PC-3 (cell line): ENCODE measurements at regions of chr5 and their contacts with region 1.

Region 1: GRCh38 chr5:128579088-128579487 is 41.0 kb upstream of the FBN2 start:
- DNase-seq: peak; percentile 92
- ATAC-seq: peak; percentile 90
- H3K4me3 ChIP-seq: peak overlapping the region; percentile 43; the same call in 1 of the 2 replicates
- H3K27ac ChIP-seq: peak overlapping the region; percentile 97
- H3K4me1 ChIP-seq: peaks cover 38% of the 10 kb centered on the region
- H3K27me3 ChIP-seq: no peaks in the 10 kb centered on the region
- CTCF ChIP-seq: no peak

Region 2: DNA sequence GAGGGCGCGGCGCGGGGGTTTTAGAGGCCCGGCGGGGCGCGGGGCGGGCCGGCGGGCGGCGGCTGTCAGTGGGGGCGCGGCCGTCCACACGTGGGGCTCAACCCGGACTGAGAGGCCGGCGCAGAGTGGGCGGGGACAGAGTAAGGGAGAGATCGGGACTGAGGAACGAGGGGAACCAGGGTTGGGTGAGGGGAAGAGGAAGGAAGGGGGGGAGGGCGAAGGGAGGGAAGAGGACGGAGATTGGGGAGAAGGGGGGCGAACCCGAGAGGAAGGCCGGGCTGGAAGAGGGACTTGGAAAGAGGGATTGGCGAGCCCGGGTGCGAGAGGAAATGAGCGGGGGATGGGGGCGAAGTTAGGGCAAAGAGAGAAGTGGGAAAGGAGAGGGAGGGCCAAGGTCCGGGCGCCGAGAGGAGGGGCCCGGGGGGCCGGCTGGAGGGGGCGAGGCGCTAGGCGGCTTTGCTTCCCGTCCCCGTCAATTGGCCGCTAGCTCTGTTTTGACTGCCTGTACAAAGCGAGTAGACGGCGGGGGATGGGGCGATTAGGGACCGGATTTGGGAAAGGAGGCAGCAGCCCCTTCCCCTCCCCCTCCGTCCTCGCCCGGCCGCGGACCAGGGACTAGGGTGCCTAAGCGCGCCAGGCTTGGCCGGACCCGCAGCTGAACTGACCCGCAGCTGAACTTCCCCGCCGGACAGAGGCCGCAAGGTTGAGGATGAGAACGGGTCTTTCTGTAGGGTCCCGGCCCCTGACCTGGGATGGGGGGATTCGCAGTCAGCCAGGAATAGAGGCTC is 40.6 kb before region 1 on chr5:
- CTCF ChIA-PET with region 1: interaction called, 3 read pairs
- POLR2A ChIA-PET with region 1: interaction called, 9 read pairs
- intact Hi-C with region 1: loop called (anchors 1 kb)
- DNase-seq: peak; percentile 77
- ATAC-seq: peak; percentile 90
- H3K4me3 ChIP-seq: peak overlapping the region; percentile 92
- H3K27ac ChIP-seq: no peak overlapping the region
- H3K4me1 ChIP-seq: peaks cover 22% of the 10 kb centered on the region
- H3K27me3 ChIP-seq: no peaks in the 10 kb centered on the region
- CTCF ChIP-seq: no peak

Region 3: DNA sequence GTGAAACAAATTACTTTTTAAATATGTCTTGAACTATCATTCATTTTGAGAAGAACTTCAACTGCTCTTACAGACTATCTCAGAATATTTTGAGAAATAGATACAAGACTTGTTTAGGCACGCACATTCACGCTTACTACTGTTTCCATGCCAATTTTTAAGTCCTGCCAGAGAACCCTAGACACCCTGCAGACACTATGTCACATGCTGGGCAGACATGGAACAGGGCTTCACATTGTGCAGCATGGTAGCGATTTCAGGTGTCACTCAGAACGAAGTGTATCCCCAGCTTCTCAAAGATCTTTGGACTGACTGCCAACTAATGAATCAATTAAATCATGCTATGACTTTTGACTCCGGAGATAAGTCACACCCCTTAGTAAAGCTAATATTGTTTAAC is 257.5 kb after region 1 on chr5:
- CTCF ChIA-PET with region 1: no interaction called
- POLR2A ChIA-PET with region 1: no interaction called
- intact Hi-C with region 1: no loop called
- DNase-seq: no peak
- ATAC-seq: no peak
- H3K4me3 ChIP-seq: no peak overlapping the region
- H3K27ac ChIP-seq: no peak overlapping the region
- H3K4me1 ChIP-seq: no peaks in the 10 kb centered on the region
- H3K27me3 ChIP-seq: no peaks in the 10 kb centered on the region
- CTCF ChIP-seq: no peak